MCF 10A (cell line): ENCODE measurements at regions of chr13 and their contacts with region 1.

Region 1: GRCh38 chr13:46321494-46322225 is 65.4 kb downstream of the RUBCNL start:
- DNase-seq: peak; percentile 68
- H3K4me3 Mint-ChIP-seq: no peak overlapping the region
- H3K27ac Mint-ChIP-seq: no peak overlapping the region
- H3K4me1 Mint-ChIP-seq: peaks cover 5% of the 10 kb centered on the region
- H3K27me3 Mint-ChIP-seq: no peaks in the 10 kb centered on the region
- CTCF ChIP-seq: peak; percentile 72

Region 2: GRCh38 chr13:45623515-45624090 is 698.1 kb before region 1 on chr13:
- CTCF ChIA-PET with region 1: interaction called, 6 read pairs
- POLR2A ChIA-PET with region 1: no interaction called
- intact Hi-C with region 1: loop called (anchors 2 kb)
- DNase-seq: peak; percentile 40
- H3K4me3 Mint-ChIP-seq: no peak overlapping the region
- H3K27ac Mint-ChIP-seq: no peak overlapping the region
- H3K4me1 Mint-ChIP-seq: peaks cover 10% of the 10 kb centered on the region
- H3K27me3 Mint-ChIP-seq: peaks cover 75% of the 10 kb centered on the region
- CTCF ChIP-seq: peak; percentile 64

Region 3: GRCh38 chr13:45925151-45925550 is 396.5 kb before region 1 on chr13:
- CTCF ChIA-PET with region 1: no interaction called
- POLR2A ChIA-PET with region 1: no interaction called
- intact Hi-C with region 1: loop called (anchors 10 kb)
- DNase-seq: peak; percentile 13
- H3K4me3 Mint-ChIP-seq: no peak overlapping the region
- H3K27ac Mint-ChIP-seq: no peak overlapping the region
- H3K4me1 Mint-ChIP-seq: peaks cover 6% of the 10 kb centered on the region
- H3K27me3 Mint-ChIP-seq: peaks cover 50% of the 10 kb centered on the region
- CTCF ChIP-seq: no peak

Region 4: DNA sequence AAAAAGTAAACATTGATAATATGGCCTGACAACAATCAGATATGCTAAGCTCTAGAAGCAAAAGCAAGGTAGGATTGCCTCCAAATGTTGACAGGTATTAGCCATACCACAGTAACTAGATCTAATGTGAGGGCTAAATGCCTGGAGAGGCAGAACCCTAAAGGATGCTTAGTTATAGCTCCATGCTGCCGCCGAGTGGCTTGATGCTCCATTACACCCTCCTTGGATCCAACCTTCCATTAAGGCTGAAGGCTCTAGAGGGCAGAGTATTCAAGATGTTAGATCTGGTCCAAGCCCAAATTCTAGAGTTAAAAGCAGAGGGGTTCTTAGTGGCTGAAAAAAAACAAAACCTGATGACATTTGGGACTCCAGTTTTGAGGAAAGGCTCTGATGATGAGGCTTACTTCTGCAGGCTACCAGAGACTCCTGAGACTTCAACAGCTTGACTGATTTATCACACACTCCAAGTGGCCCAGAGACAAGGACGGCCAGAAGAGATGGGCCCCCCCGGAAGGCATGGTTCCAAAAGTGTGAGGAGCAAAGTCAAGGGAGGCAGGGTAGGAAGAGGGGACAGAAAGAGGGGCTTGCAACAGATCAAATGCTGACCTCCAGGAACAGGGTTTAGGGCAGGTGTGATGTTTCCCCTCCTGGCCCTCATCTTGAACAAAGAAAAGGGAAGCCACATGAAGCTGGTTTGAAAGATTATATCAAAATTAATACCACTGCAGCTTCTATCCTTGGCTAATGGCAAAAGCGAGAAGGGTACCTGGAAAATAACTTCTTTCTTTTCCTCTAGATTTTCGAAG is 194.9 kb before region 1 on chr13:
- CTCF ChIA-PET with region 1: interaction called, 6 read pairs
- POLR2A ChIA-PET with region 1: no interaction called
- intact Hi-C with region 1: loop called (anchors 1 kb)
- DNase-seq: peak; percentile 87
- H3K4me3 Mint-ChIP-seq: no peak overlapping the region
- H3K27ac Mint-ChIP-seq: no peak overlapping the region
- H3K4me1 Mint-ChIP-seq: peaks cover 6% of the 10 kb centered on the region
- H3K27me3 Mint-ChIP-seq: peaks cover 29% of the 10 kb centered on the region
- CTCF ChIP-seq: peak; percentile 88

Region 5: GRCh38 chr13:46146899-46147298 is 174.8 kb before region 1 on chr13:
- CTCF ChIA-PET with region 1: interaction called, 4 read pairs
- POLR2A ChIA-PET with region 1: no interaction called
- intact Hi-C with region 1: loop called (anchors 5 kb)
- DNase-seq: no peak
- H3K4me3 Mint-ChIP-seq: no peak overlapping the region
- H3K27ac Mint-ChIP-seq: no peak overlapping the region
- H3K4me1 Mint-ChIP-seq: no peaks in the 10 kb centered on the region
- H3K27me3 Mint-ChIP-seq: peaks cover 35% of the 10 kb centered on the region
- CTCF ChIP-seq: peak; percentile 24

Region 6: DNA sequence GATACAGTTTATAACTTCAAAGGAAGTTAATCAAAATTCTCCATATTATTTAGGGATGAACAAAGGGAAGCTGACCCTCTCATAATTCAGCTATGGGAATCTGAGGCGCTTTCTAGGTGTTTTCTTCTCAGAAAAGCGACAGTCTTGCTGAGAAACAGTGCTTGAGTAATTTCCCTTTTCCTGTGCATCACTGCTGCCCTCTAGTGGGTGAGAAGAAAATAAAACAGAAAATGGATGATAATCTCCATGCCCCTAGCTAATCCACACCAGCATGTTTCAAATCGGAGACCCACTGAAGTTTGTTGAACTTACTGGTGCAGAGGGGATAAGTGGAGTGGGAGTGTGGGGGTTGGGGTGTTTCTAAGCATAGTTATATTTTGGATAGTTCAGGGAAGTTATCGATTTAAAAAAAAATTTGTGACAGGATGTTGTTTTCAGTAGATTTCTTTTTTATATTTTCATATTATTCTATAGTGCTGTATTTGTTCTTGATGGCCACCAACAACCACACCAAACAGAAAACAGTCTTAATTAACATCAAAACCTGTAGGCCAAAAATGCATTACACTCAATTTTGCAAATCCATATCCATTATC is 161.1 kb before region 1 on chr13:
- CTCF ChIA-PET with region 1: interaction called, 8 read pairs
- POLR2A ChIA-PET with region 1: no interaction called
- intact Hi-C with region 1: loop called (anchors 1 kb)
- DNase-seq: peak; percentile 70
- H3K4me3 Mint-ChIP-seq: no peak overlapping the region
- H3K27ac Mint-ChIP-seq: no peak overlapping the region
- H3K4me1 Mint-ChIP-seq: no peaks in the 10 kb centered on the region
- H3K27me3 Mint-ChIP-seq: peaks cover 54% of the 10 kb centered on the region
- CTCF ChIP-seq: peak; percentile 74

Region 7: GRCh38 chr13:46387064-46387851 is 65.6 kb after region 1 on chr13 and contains the start of gene RUBCNL:
- CTCF ChIA-PET with region 1: interaction called, 4 read pairs
- POLR2A ChIA-PET with region 1: no interaction called
- intact Hi-C with region 1: loop called (anchors 1 kb)
- DNase-seq: peak; percentile 68
- H3K4me3 Mint-ChIP-seq: peak within 1 kb of the TSS; percentile 62
- H3K27ac Mint-ChIP-seq: no peak within 1 kb of the TSS
- H3K4me1 Mint-ChIP-seq: peaks cover 7% of the 10 kb centered on the region
- H3K27me3 Mint-ChIP-seq: peaks cover 19% of the 10 kb centered on the region
- CTCF ChIP-seq: no peak
- total RNA-seq, gene RUBCNL: 0.37 and 1.2 TPM in 2 replicates